Heart right ventricle (tissue), 16 donors: ENCODE measurements at regions of chr22 and their contacts with region 1.

Region 1: DNA sequence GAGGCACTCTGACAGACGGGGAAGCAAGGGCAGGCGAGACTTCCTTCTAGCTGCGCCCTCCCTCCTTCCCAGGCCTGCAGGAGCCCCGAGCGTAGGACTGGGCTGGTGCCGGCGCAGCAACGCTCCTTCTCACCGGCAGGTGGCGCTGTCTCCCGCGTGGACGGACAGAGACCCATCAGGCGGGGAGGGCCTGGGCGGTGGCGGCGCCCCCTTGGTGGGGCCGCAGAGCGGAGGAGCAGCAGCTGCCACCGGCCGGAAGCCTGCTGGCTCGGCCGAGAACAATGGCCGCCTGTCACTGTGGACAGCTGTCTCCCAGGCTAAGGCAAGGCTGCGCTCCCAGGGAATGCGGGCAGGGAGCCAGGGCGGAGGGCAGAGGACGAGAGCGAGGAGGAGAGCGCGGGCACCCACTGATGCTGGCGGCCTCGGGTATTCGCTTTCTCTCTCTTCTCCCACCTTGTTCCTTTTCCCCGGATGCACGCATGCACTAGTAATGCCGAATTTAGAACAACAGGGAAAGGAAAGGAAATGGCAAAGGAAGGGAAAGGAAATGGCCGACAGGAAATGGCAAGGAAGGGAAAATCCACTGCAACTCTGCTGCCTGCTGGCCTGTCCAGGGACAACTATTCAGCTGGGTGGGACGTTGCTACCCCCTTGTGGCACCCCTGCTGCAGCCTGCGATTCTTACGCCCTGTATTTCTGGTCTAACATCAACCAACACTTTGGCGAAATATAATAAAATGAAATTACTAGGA is 14.4 kb downstream of the PPM1F start:
- DNase-seq: peak; percentile 93 to 97
- ATAC-seq: peak; percentile 85 to 96 (median 90)
- H3K4me3 ChIP-seq: peak overlapping the region; percentile 22 to 67 (median 59)
- H3K27ac ChIP-seq: peak overlapping the region; percentile 90 to 98 (median 96)
- H3K4me1 ChIP-seq: peaks cover 35 to 85% (median 78%) of the 10 kb centered on the region in 9 donors
- H3K27me3 ChIP-seq: no peaks in the 10 kb centered on the region
- CTCF ChIP-seq: peak; percentile 90 to 99 (median 97)

Region 2: GRCh38 chr22:21712894-21713712 is 225.1 kb before region 1 on chr22:
- intact Hi-C with region 1: loop called (anchors 1 to 5 kb)
- DNase-seq: peak; percentile 44 to 70
- ATAC-seq: peak; percentile 86 to 96 (median 92)
- H3K4me3 ChIP-seq: peak overlapping the region in 5 of 10 donors; percentile 4 to 28 (median 13)
- H3K27ac ChIP-seq: peak overlapping the region in 2 of 10 donors; percentile 28 to 41
- H3K4me1 ChIP-seq: peaks cover 0 to 19% (median 9%) of the 10 kb centered on the region in 9 donors
- H3K27me3 ChIP-seq: no peaks in the 10 kb centered on the region
- CTCF ChIP-seq: peak; percentile 46 to 89 (median 77)

Region 3: DNA sequence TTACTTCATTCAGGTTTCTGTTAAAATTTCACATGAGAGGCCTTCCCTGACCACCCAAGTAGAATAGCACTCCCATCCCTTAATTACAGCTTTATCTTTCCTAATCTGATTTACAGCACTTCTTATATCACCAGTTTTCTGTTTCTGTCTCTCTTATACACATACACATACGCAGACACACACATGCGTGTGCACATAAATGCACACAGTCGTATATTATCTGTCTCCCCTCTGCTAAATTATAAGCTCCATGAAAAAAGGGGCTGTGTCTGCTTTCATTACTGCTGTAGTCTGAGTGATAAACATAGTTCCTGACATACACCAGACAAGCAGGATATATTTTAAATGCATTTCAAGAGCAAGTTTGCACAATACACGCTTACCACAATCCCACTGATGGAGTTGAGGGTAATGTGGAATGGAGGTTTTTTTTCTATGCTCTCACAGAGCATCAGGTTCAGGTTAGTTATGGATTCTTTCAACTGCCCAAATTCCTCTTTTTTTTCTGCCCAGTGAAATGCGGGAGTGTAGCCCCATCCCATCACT is 58.0 kb after region 1 on chr22:
- intact Hi-C with region 1: no loop called
- DNase-seq: no peak
- ATAC-seq: no peak
- H3K4me3 ChIP-seq: no peak overlapping the region
- H3K27ac ChIP-seq: no peak overlapping the region
- H3K4me1 ChIP-seq: no peaks in the 10 kb centered on the region
- H3K27me3 ChIP-seq: peaks cover 0 to 3% (median 0%) of the 10 kb centered on the region in 7 donors
- CTCF ChIP-seq: no peak